ENCODE measurements at regions of chr1 and their contacts with region 1.

Region 1: GRCh38 chr1:78101514-78101913 is 55.7 kb downstream of the GIPC2 start:
- DNase-seq: no peak
- ATAC-seq: peak; percentile 71 to 85 (median 75)
- H3K4me3 ChIP-seq: no peak overlapping the region
- H3K27ac ChIP-seq: peak overlapping the region; percentile 69
- H3K4me1 ChIP-seq: peaks cover 18% of the 10 kb centered on the region
- H3K27me3 ChIP-seq: no peaks in the 10 kb centered on the region
- CTCF ChIP-seq: no peak

Region 2: GRCh38 chr1:78058670-78059069 is 42.8 kb before region 1 on chr1:
- intact Hi-C with region 1: no loop called
- DNase-seq: no peak
- ATAC-seq: no peak
- H3K4me3 ChIP-seq: no peak overlapping the region
- H3K27ac ChIP-seq: no peak overlapping the region
- H3K4me1 ChIP-seq: peaks cover 14% of the 10 kb centered on the region
- H3K27me3 ChIP-seq: no peaks in the 10 kb centered on the region
- CTCF ChIP-seq: no peak

Region 3: GRCh38 chr1:78070758-78071157 is 30.8 kb before region 1 on chr1:
- intact Hi-C with region 1: loop called in 1 of 2 experiments (anchors 5 kb)
- DNase-seq: no peak
- ATAC-seq: peak; percentile 93 to 97 (median 94)
- H3K4me3 ChIP-seq: no peak overlapping the region
- H3K27ac ChIP-seq: peak overlapping the region; percentile 69
- H3K4me1 ChIP-seq: peaks cover 38% of the 10 kb centered on the region
- H3K27me3 ChIP-seq: no peaks in the 10 kb centered on the region
- CTCF ChIP-seq: no peak

Measured in psoas muscle (tissue), 8 donors.